ENCODE measurements at regions of chr1 and their contacts with region 1.

Region 1: DNA sequence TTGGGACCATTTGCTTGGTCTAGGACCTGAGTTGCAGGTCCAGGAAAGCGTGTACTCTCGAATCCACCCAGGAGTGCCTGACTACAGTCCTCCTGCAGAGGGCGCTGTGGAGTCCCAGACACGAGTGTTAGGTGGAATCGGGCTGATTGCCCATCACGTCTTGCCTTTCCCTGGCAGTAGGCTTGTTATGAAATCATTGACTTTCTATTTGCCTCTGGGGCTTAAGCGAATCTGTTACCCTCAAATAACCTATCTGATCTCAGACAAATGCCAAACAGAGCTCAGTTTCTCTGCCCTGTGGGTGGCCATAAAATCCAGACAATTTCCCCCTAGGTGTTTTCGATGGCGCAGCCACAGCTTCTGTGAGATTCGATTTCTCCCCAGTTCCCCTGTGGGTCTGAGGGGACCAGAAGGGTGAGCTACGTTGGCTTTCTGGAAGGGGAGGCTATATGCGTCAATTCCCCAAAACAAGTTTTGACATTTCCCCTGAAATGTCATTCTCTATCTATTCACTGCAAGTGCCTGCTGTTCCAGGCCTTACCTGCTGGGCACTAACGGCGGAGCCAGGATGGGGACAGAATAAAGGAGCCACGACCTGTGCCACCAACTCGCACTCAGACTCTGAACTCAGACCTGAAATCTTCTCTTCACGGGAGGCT is at the start of gene IL20:
- DNase-seq: peak; percentile 84 to 91
- ATAC-seq: peak; percentile 86 to 96 (median 94)
- H3K4me3 ChIP-seq: no peak within 1 kb of the TSS
- H3K27ac ChIP-seq: no peak within 1 kb of the TSS
- H3K4me1 ChIP-seq: peaks cover 6% of the 10 kb centered on the region
- H3K27me3 ChIP-seq: peaks cover 0 to 5% (median 0%) of the 10 kb centered on the region in 3 donors
- CTCF ChIP-seq: peak; percentile 81
- total RNA-seq, gene IL20: 1.2 TPM in 1 of 4 donors, not detected in the others

Region 2: GRCh38 chr1:206551986-206552326 is 313.2 kb before region 1 on chr1:
- intact Hi-C with region 1: no loop called
- DNase-seq: no peak
- ATAC-seq: no peak
- H3K4me3 ChIP-seq: no peak overlapping the region
- H3K27ac ChIP-seq: no peak overlapping the region
- H3K4me1 ChIP-seq: peaks cover 4% of the 10 kb centered on the region
- H3K27me3 ChIP-seq: no peaks in the 10 kb centered on the region
- CTCF ChIP-seq: no peak

Region 3: DNA sequence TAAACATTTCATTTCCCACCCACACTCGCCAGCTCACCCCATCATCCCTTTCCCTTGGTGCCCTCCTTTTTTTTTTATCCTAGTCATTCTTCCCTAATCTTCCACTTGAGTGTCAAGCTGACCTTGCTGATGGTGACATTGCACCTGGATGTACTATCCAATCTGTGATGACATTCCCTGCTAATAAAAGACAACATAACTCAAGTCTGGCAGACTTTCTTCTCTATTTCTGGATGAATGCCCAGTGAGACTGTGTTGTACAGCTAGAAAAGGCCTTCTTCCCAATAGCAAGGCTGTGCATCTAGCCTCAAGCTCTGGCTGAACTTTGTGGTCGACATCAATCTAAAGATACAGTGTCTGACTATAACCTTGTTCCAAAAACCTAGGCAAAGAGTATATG is 38.5 kb after region 1 on chr1:
- intact Hi-C with region 1: loop called (anchors 1 to 5 kb)
- DNase-seq: no peak
- ATAC-seq: peak; percentile 34 to 70 (median 57)
- H3K4me3 ChIP-seq: no peak overlapping the region
- H3K27ac ChIP-seq: no peak overlapping the region
- H3K4me1 ChIP-seq: no peaks in the 10 kb centered on the region
- H3K27me3 ChIP-seq: no peaks in the 10 kb centered on the region
- CTCF ChIP-seq: no peak

Region 4: GRCh38 chr1:207134581-207134980 is 269.4 kb after region 1 on chr1:
- intact Hi-C with region 1: no loop called
- DNase-seq: no peak
- ATAC-seq: no peak
- H3K4me3 ChIP-seq: no peak overlapping the region
- H3K27ac ChIP-seq: no peak overlapping the region
- H3K4me1 ChIP-seq: no peaks in the 10 kb centered on the region
- H3K27me3 ChIP-seq: no peaks in the 10 kb centered on the region
- CTCF ChIP-seq: no peak

Region 5: DNA sequence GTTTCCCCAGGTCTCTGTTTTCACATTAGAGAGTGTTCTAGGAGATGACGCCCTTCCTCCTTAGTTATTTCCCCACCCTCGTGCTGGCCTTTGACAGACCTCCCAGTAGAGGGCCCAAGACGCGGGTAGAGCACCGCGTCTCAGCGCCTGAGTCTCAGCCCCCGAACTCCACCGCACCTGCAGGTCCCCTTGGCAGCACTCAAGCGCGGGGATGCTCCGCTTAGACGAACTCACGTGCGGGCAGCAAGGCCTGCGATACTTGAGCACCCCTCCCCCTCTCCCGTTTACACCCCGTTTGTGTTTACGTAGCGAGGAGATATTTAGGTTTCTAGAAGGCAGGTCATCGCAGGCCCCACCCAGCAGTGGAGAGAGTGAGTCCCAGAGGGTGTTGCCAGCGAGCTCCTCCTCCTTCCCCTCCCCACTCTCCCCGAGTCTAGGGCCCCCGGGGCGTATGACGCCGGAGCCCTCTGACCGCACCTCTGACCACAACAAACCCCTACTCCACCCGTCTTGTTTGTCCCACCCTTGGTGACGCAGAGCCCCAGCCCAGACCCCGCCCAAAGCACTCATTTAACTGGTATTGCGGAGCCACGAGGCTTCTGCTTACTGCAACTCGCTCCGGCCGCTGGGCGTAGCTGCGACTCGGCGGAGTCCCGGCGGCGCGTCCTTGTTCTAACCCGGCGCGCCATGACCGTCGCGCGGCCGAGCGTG is 456.1 kb after region 1 on chr1 and contains the start of gene CD55:
- intact Hi-C with region 1: no loop called
- DNase-seq: peak; percentile 95 to 98
- ATAC-seq: peak; percentile 93 to 96 (median 94)
- H3K4me3 ChIP-seq: peak within 1 kb of the TSS; percentile 96
- H3K27ac ChIP-seq: peak within 1 kb of the TSS; percentile 98
- H3K4me1 ChIP-seq: peaks cover 46% of the 10 kb centered on the region
- H3K27me3 ChIP-seq: no peaks in the 10 kb centered on the region
- CTCF ChIP-seq: peak; percentile 30
- total RNA-seq, gene CD55: 44.2 to 108 (median 81.9) TPM